Heart right ventricle (tissue), 16 donors: ENCODE measurements at regions of chr4 and their contacts with region 1.

Region 1: DNA sequence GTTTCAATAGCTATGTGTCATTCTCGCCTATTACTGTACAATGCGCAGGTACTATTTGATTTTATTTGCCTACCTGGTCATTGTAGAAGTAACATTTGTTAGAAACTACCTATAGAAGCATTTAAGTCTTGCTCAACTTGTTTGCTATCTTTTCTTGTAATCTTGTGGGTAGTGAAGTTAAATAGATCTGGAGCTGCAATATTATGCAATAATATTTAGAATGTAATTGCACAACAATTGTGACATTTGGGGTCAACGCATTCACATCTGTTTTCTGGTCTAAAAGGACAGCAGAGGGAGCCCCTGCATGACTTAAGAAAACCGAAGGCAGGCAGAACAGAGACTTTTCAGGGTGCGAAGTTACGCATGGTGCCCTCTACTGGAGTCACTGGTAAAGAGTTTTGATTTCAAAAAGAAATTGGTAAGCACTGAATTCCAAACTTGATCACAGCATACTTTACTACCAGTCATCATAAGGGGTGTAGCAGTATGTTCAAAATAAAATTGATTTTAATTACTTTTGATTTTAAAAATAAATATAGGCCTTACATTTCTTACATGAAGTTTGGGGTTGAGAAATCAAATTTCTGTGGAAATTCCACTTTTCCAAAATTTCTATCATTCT is 503.2 kb upstream of the FAM241A start:
- DNase-seq: peak in 1 of 2 donors; percentile 49
- ATAC-seq: peak in 4 of 8 donors; percentile 28 to 76 (median 60)
- H3K4me3 ChIP-seq: no peak overlapping the region
- H3K27ac ChIP-seq: no peak overlapping the region
- H3K4me1 ChIP-seq: no peaks in the 10 kb centered on the region
- H3K27me3 ChIP-seq: peaks cover 0 to 9% (median 0%) of the 10 kb centered on the region in 7 donors
- CTCF ChIP-seq: peak; percentile 30 to 83 (median 66)

Region 2: GRCh38 chr4:111011458-111011857 is 630.6 kb before region 1 on chr4:
- intact Hi-C with region 1: no loop called
- DNase-seq: no peak
- ATAC-seq: no peak
- H3K4me3 ChIP-seq: no peak overlapping the region
- H3K27ac ChIP-seq: no peak overlapping the region
- H3K4me1 ChIP-seq: no peaks in the 10 kb centered on the region
- H3K27me3 ChIP-seq: no peaks in the 10 kb centered on the region
- CTCF ChIP-seq: no peak

Region 3: GRCh38 chr4:111854494-111855087 is 212.5 kb after region 1 on chr4:
- intact Hi-C with region 1: loop called in 6 of 10 experiments (anchors 5 to 10 kb)
- DNase-seq: peak in 1 of 2 donors; percentile 4
- ATAC-seq: no peak
- H3K4me3 ChIP-seq: no peak overlapping the region
- H3K27ac ChIP-seq: no peak overlapping the region
- H3K4me1 ChIP-seq: no peaks in the 10 kb centered on the region
- H3K27me3 ChIP-seq: peaks cover 0 to 13% (median 0%) of the 10 kb centered on the region in 7 donors
- CTCF ChIP-seq: peak; percentile 16 to 62 (median 45)

Region 4: DNA sequence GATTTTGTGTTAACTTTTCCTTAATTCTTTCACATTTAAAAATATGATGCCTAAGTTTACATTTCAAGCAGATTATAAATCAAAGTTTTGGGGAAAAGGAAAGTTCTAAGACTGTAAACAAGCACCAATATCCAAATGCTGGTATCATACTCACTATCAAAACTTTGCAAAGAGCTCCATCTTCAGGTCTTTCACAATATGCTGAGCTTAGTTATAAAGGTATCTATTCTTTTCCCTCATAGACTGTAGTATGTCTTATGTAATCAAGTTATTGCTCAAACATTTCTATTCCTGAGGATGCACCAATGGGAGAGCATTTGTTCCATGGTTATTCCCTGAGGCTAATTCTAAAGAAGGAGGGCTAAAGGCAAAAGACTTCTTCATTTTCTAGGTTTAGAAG is 295.3 kb after region 1 on chr4:
- intact Hi-C with region 1: loop called in 1 of 10 experiments (anchors 10 kb)
- DNase-seq: no peak
- ATAC-seq: no peak
- H3K4me3 ChIP-seq: no peak overlapping the region
- H3K27ac ChIP-seq: no peak overlapping the region
- H3K4me1 ChIP-seq: no peaks in the 10 kb centered on the region
- H3K27me3 ChIP-seq: peaks cover 0 to 11% (median 7%) of the 10 kb centered on the region in 7 donors
- CTCF ChIP-seq: no peak

Region 5: GRCh38 chr4:112031712-112032328 is 389.8 kb after region 1 on chr4:
- intact Hi-C with region 1: loop called in 3 of 10 experiments (anchors 5 to 10 kb)
- DNase-seq: peak in 1 of 2 donors; percentile 7
- ATAC-seq: no peak
- H3K4me3 ChIP-seq: no peak overlapping the region
- H3K27ac ChIP-seq: no peak overlapping the region
- H3K4me1 ChIP-seq: no peaks in the 10 kb centered on the region
- H3K27me3 ChIP-seq: peaks cover 0 to 51% (median 41%) of the 10 kb centered on the region in 7 donors
- CTCF ChIP-seq: peak in 7 of 9 donors; percentile 43 to 68 (median 63)